Head of caudate nucleus (tissue), 42 donors: ENCODE measurements at regions of chr1 and their contacts with region 1.

Region 1: GRCh38 chr1:175887981-175888433 is 144.6 kb upstream of the TNR start:
- DNase-seq: peak; percentile 76 to 95 (median 87)

Region 2: DNA sequence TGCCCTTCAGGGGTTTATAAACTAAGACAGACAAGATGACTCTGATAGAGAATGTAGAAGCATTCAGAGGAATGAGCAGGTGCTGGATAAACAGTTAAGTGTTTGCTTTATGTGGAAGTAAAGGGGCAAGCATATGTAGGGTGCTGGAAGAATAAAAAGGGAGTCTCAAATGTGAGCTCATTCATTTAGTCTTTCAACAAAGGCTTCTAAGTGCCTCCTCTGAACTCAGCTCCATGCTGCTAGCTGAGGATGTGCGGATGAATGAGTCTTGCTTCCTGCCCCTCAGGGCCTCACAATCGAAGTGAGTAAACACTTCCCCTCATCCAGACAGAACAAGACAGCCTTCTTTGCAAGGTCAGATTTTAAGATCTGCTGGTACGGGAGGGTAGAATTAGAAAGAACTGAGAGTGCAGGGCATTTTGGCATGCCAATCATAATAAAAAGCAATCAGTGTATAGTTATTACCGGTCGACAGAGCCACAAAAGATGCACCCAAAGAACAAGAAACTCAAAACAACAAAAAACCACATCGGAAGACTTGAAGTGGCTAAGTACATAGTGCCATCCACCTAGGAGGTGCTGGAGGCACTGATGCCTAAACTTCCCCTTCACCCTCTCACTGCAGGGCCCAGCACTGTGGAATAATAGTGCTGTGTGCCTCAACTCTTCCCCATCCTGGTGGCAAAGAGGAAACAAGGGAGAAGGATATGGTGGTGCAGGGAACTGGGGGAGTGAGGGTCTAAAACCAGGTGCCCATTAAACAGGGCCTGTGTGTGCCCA is 214.4 kb before region 1 on chr1:
- intact Hi-C with region 1: loop called (anchors 10 kb)
- DNase-seq: peak in 1 of 42 donors; percentile 18

Region 3: DNA sequence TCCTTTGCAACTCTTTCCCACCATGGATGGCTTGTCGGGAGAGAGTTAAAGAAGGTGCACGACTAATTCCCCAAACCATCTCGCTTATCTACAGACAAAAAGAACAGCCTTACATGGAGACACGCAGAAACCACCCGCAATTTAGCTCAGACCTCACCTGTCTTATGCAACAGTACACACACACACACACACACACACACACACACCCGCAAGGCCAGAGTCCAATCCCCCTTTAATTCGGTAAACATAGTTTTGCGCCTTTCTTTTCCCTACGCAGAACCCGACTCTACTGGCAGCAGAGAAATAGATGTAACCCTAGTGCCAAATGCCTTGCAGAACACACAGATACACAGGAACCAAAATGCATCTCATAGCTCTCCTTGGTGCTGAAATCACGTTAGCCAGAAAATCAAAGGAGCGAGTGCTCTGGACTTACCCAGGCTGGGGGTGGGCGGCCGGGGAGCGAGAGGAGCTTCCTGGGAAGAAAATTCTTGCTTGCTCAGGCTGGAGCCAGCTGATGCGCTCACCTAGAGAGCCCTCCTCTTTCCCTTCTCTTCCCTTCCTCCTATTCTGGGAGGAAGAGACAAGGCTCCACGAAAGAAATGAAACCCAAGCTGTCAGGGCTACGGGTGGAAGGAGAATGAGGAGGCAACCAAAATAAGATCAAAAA is 145.1 kb before region 1 on chr1:
- intact Hi-C with region 1: loop called (anchors 5 kb)
- DNase-seq: peak in 33 of 42 donors; percentile 12 to 72 (median 39)

Region 4: GRCh38 chr1:175991706-175992105 is 103.7 kb after region 1 on chr1:
- intact Hi-C with region 1: no loop called
- DNase-seq: no peak